ENCODE measurements at regions of chr7 and their contacts with region 1.

Region 1: DNA sequence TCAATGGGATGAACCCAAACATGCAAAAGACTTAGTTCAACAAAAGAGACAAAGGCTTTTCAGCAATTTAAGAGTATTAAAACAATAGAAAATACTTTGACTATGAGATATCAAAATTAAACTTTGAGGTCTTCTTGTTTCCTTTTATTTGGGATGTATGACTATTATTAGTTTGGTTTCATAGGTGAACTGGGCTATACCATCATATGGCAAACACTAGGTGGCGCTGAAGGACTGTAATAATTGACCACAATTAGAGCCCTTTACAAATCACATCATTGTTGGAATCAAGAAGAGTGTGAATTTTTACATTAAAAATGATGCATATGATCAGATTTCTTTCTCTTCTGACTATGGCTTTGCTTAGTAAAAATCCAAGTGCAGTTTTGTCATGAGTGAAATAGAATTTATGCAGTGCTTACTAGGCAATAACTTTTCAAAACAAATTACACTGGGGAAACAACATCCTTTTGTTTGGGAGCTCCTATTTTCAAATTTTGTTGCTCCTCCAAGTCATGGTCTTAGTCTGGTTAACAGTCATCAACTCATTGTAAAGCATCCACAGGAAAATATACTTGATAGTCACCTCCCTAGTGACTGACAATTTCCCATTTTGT is 14.7 kb upstream of the NXPH1 start:
- DNase-seq: peak; percentile 81
- H3K4me3 Mint-ChIP-seq: no peak overlapping the region
- H3K27ac Mint-ChIP-seq: no peak overlapping the region
- H3K4me1 Mint-ChIP-seq: no peaks in the 10 kb centered on the region
- H3K27me3 Mint-ChIP-seq: no peaks in the 10 kb centered on the region
- CTCF ChIP-seq: peak; percentile 87

Region 2: DNA sequence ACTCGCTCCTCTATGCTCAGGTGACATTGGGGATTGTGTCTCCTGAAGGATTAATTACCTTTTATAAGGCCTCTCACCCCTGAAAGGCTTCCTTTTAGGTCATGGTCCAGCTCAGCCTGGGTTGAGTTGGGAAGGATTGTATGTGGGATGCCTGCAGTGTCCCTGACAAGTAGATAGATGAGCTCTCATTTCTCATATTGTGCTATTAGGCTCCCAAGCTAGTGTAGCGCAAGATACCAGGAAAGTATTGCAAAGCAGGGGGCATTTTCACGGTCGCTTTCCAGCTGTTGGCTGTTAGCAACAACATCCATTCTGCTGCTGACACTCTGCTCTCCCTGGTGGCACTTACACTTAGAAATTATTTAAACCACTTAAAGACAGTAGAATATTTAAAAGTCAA is 46.6 kb after region 1 on chr7:
- CTCF ChIA-PET with region 1: no interaction called
- intact Hi-C with region 1: no loop called
- DNase-seq: no peak
- H3K4me3 Mint-ChIP-seq: no peak overlapping the region
- H3K27ac Mint-ChIP-seq: no peak overlapping the region
- H3K4me1 Mint-ChIP-seq: peaks cover 13% of the 10 kb centered on the region
- H3K27me3 Mint-ChIP-seq: no peaks in the 10 kb centered on the region
- CTCF ChIP-seq: no peak

Region 3: DNA sequence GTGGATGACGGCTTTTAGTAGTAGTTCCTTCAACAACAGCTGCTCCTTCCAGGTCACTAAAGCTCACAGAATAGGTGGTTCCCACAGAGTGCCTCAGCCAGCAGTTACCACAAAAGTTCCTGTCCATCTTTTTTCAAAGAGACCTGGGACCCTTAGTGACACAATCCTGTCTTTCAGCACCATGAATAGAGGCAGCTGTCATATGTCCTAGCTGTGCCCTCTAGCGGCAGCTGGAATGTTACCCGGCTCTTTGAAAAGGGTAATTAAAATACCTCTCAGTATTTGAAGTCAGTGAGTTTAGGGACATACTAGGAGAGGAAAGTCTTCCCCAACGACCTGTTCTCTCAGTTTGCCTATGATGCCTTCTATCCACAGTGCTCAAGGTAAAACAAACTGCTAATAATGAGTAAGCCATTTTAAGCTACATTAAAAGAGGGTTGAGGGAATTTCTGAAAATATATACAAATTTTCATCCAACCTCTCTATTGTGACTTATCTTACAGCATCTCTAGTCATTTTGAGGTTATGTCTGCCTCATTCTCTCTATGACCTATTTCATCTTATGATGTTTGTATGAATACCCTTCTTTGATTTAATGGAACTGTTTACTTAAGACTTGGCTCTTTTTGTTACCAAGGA is 305.5 kb after region 1 on chr7:
- CTCF ChIA-PET with region 1: interaction called, 7 read pairs
- intact Hi-C with region 1: loop called (anchors 1 kb)
- DNase-seq: peak; percentile 74
- H3K4me3 Mint-ChIP-seq: no peak overlapping the region
- H3K27ac Mint-ChIP-seq: no peak overlapping the region
- H3K4me1 Mint-ChIP-seq: no peaks in the 10 kb centered on the region
- H3K27me3 Mint-ChIP-seq: no peaks in the 10 kb centered on the region
- CTCF ChIP-seq: peak; percentile 86

Region 4: GRCh38 chr7:8785077-8785476 is 366.3 kb after region 1 on chr7:
- CTCF ChIA-PET with region 1: no interaction called
- intact Hi-C with region 1: loop called (anchors 1 kb)
- DNase-seq: no peak
- H3K4me3 Mint-ChIP-seq: no peak overlapping the region
- H3K27ac Mint-ChIP-seq: no peak overlapping the region
- H3K4me1 Mint-ChIP-seq: no peaks in the 10 kb centered on the region
- H3K27me3 Mint-ChIP-seq: no peaks in the 10 kb centered on the region
- CTCF ChIP-seq: no peak

Region 5: DNA sequence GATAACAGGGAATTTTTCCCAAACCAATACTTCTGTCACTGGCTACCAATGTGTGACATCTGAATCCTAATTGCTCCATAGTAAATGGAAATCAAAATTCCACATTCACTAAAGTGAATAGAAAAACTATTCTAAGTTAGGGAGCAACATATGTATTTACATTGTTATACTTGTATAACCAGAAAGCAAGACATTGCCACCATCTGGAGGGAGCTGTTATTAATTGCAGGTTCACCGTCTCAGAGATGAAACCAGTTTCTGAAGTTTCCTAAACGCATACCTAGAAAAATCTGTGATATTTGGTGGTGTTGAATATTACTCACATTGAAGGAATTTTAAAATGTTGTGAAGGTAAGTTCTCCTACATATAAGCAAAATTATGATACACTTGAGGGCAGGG is 404.7 kb after region 1 on chr7:
- CTCF ChIA-PET with region 1: no interaction called
- intact Hi-C with region 1: loop called (anchors 1 kb)
- DNase-seq: no peak
- H3K4me3 Mint-ChIP-seq: no peak overlapping the region
- H3K27ac Mint-ChIP-seq: no peak overlapping the region
- H3K4me1 Mint-ChIP-seq: no peaks in the 10 kb centered on the region
- H3K27me3 Mint-ChIP-seq: no peaks in the 10 kb centered on the region
- CTCF ChIP-seq: no peak

Region 6: GRCh38 chr7:10022957-10023356 is 1604.2 kb after region 1 on chr7:
- CTCF ChIA-PET with region 1: no interaction called
- intact Hi-C with region 1: loop called (anchors 10 kb)
- DNase-seq: peak; percentile 73
- H3K4me3 Mint-ChIP-seq: peak overlapping the region; percentile 46
- H3K27ac Mint-ChIP-seq: peak overlapping the region; percentile 80
- H3K4me1 Mint-ChIP-seq: peaks cover 9% of the 10 kb centered on the region
- H3K27me3 Mint-ChIP-seq: no peaks in the 10 kb centered on the region
- CTCF ChIP-seq: no peak

Region 7: DNA sequence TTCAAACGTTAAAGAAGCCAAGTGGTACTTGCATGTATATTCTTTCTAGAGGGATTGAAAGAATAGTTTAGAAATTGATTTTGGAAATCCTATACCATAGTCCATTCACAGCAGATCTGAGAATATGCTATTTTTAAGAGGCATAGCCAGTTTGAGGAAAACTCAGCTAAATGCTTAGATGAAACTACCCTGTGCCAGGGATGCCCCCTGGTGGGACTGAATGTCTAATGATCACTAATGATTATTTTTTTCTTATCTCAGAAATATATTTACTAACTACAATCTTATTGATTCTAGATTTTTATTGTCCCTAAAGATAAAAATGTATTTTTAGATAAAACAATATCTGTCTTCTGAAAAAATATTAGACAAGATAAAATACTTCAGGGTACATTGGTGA is 1710.0 kb after region 1 on chr7:
- CTCF ChIA-PET with region 1: no interaction called
- intact Hi-C with region 1: loop called (anchors 5 kb)
- DNase-seq: peak; percentile 56
- H3K4me3 Mint-ChIP-seq: no peak overlapping the region
- H3K27ac Mint-ChIP-seq: no peak overlapping the region
- H3K4me1 Mint-ChIP-seq: no peaks in the 10 kb centered on the region
- H3K27me3 Mint-ChIP-seq: no peaks in the 10 kb centered on the region
- CTCF ChIP-seq: peak; percentile 58

Measured in Calu3 (cell line).